ENCODE measurements at regions of chrX and their contacts with region 1.

Region 1: GRCh38 chrX:10119399-10119990 is 37.3 kb upstream of the CLCN4 start:
- DNase-seq: peak; percentile 55
- CTCF ChIP-seq: peak; percentile 67

Region 2: GRCh38 chrX:9885150-9885549 is 234.3 kb before region 1 on chrX:
- CTCF ChIA-PET with region 1: interaction called, 34 read pairs
- POLR2A ChIA-PET with region 1: no interaction called
- DNase-seq: peak; percentile 75
- CTCF ChIP-seq: peak; percentile 67

Region 3: GRCh38 chrX:10004852-10005475 is 114.5 kb before region 1 on chrX:
- CTCF ChIA-PET with region 1: interaction called, 305 read pairs
- POLR2A ChIA-PET with region 1: no interaction called
- DNase-seq: no peak
- CTCF ChIP-seq: no peak

Region 4: DNA sequence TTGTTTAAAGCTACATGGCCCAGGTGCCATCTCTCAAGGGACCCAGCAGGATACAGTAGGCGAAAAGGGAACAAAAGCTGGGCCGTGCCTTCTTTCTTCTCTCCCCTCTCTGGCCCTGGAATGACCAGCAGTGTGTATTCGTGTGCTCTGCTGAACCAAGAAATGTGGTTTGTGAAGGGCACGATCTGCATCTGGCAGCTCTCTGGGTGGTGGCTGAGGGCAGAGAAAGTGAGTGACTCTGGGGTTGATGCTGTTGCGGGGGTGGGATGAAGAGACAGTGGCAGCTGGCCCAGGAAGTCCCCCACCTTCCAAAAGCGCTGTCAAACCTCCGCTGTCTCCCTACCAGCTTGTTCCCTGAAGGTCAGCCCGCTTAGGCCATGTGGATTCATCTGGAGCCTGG is 64.1 kb before region 1 on chrX:
- CTCF ChIA-PET with region 1: interaction called, 10 read pairs
- POLR2A ChIA-PET with region 1: no interaction called
- DNase-seq: no peak
- CTCF ChIP-seq: no peak

Region 5: DNA sequence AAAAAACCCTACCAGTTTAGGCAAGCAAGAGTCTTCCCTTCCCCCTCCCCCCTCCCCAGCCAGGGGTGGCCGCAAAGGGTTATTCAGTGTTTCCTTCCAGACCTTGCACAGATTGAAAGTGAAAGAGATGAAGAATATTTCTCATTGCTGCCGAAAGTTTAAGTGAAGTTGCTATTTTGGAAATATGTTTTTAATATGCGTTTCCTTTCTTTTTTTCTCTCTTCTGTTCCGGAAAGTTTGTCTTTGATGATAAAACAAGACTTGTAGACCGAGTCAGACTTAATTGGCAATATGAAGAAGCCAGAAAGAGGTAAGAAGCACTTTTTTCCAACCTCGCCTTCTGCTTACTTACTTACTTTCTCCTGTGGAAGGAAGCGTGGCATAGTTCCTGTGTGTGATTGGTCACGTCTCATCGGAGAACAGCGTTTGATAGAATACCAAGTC is 21.2 kb before region 1 on chrX:
- CTCF ChIA-PET with region 1: interaction called, 45 read pairs
- POLR2A ChIA-PET with region 1: no interaction called
- DNase-seq: peak; percentile 60
- CTCF ChIP-seq: no peak

Region 6: GRCh38 chrX:10158279-10159144 is 39.0 kb after region 1 on chrX:
- CTCF ChIA-PET with region 1: interaction called, 11 read pairs
- POLR2A ChIA-PET with region 1: no interaction called
- DNase-seq: peak; percentile 43
- CTCF ChIP-seq: no peak

Measured in GM10248 (cell line).